ENCODE measurements at regions of chr9 and their contacts with region 1.

Region 1: GRCh38 chr9:127049044-127049443 is 73.4 kb downstream of the ANGPTL2 start:
- DNase-seq: peak in 5 of 9 donors; percentile 4 to 30 (median 21)
- ATAC-seq: peak; percentile 90
- H3K4me3 ChIP-seq: no peak overlapping the region
- H3K4me3 Mint-ChIP-seq: peak overlapping the region in 7 of 10 donors; percentile 7 to 82 (median 34)
- H3K27ac ChIP-seq: no peak overlapping the region
- H3K27ac Mint-ChIP-seq: peak overlapping the region in 2 of 9 donors; percentile 21 to 83
- H3K4me1 ChIP-seq: peaks cover 0 to 21% of the 10 kb centered on the region in 2 donors
- H3K4me1 Mint-ChIP-seq: peaks cover 14 to 42% (median 20%) of the 10 kb centered on the region in 7 donors
- H3K27me3 ChIP-seq: no peaks in the 10 kb centered on the region
- H3K27me3 Mint-ChIP-seq: peaks cover 0 to 10% (median 0%) of the 10 kb centered on the region in 5 donors

Region 2: GRCh38 chr9:126439402-126439765 is 609.7 kb before region 1 on chr9:
- CTCF ChIA-PET with region 1: no interaction called
- POLR2A ChIA-PET with region 1: no interaction called
- intact Hi-C with region 1: no loop called
- DNase-seq: no peak
- ATAC-seq: no peak
- H3K4me3 ChIP-seq: no peak overlapping the region
- H3K4me3 Mint-ChIP-seq: no peak overlapping the region
- H3K27ac ChIP-seq: no peak overlapping the region
- H3K27ac Mint-ChIP-seq: no peak overlapping the region
- H3K4me1 ChIP-seq: no peaks in the 10 kb centered on the region
- H3K4me1 Mint-ChIP-seq: peaks cover 1 to 10% (median 7%) of the 10 kb centered on the region in 7 donors
- H3K27me3 ChIP-seq: no peaks in the 10 kb centered on the region
- H3K27me3 Mint-ChIP-seq: peaks cover 0 to 18% (median 0%) of the 10 kb centered on the region in 5 donors

Region 3: GRCh38 chr9:126773004-126773607 is 275.9 kb before region 1 on chr9:
- CTCF ChIA-PET with region 1: no interaction called
- POLR2A ChIA-PET with region 1: no interaction called
- intact Hi-C with region 1: no loop called
- DNase-seq: no peak
- ATAC-seq: no peak
- H3K4me3 ChIP-seq: no peak overlapping the region
- H3K4me3 Mint-ChIP-seq: no peak overlapping the region
- H3K27ac ChIP-seq: no peak overlapping the region
- H3K27ac Mint-ChIP-seq: no peak overlapping the region
- H3K4me1 ChIP-seq: no peaks in the 10 kb centered on the region
- H3K4me1 Mint-ChIP-seq: peaks cover 0 to 2% (median 0%) of the 10 kb centered on the region in 7 donors
- H3K27me3 ChIP-seq: peaks cover 0 to 5% of the 10 kb centered on the region in 2 donors
- H3K27me3 Mint-ChIP-seq: peaks cover 1 to 45% (median 6%) of the 10 kb centered on the region in 5 donors

Region 4: GRCh38 chr9:127004946-127005769 is 43.9 kb before region 1 on chr9:
- CTCF ChIA-PET with region 1: no interaction called
- POLR2A ChIA-PET with region 1: no interaction called
- intact Hi-C with region 1: loop called in 1 of 2 experiments (anchors 1 kb)
- DNase-seq: peak in 8 of 9 donors; percentile 46 to 82 (median 74)
- ATAC-seq: peak; percentile 97
- H3K4me3 ChIP-seq: no peak overlapping the region
- H3K4me3 Mint-ChIP-seq: peak overlapping the region in 7 of 10 donors; percentile 13 to 56 (median 47)
- H3K27ac ChIP-seq: no peak overlapping the region
- H3K27ac Mint-ChIP-seq: peak overlapping the region in 8 of 9 donors; percentile 1 to 83 (median 64)
- H3K4me1 ChIP-seq: peaks cover 18 to 23% of the 10 kb centered on the region in 2 donors
- H3K4me1 Mint-ChIP-seq: peaks cover 15 to 36% (median 19%) of the 10 kb centered on the region in 7 donors
- H3K27me3 ChIP-seq: peaks cover 0 to 4% of the 10 kb centered on the region in 2 donors
- H3K27me3 Mint-ChIP-seq: peaks cover 14 to 29% (median 20%) of the 10 kb centered on the region in 5 donors